Calu3 (cell line): ENCODE measurements at regions of chr7 and their contacts with region 1.

Region 1: GRCh38 chr7:95871078-95871782 is 98.9 kb downstream of the DYNC1I1 start:
- DNase-seq: peak; percentile 24
- H3K4me3 Mint-ChIP-seq: no peak overlapping the region
- H3K27ac Mint-ChIP-seq: no peak overlapping the region
- H3K4me1 Mint-ChIP-seq: no peaks in the 10 kb centered on the region
- H3K27me3 Mint-ChIP-seq: peaks cover 9% of the 10 kb centered on the region
- CTCF ChIP-seq: peak; percentile 33

Region 2: DNA sequence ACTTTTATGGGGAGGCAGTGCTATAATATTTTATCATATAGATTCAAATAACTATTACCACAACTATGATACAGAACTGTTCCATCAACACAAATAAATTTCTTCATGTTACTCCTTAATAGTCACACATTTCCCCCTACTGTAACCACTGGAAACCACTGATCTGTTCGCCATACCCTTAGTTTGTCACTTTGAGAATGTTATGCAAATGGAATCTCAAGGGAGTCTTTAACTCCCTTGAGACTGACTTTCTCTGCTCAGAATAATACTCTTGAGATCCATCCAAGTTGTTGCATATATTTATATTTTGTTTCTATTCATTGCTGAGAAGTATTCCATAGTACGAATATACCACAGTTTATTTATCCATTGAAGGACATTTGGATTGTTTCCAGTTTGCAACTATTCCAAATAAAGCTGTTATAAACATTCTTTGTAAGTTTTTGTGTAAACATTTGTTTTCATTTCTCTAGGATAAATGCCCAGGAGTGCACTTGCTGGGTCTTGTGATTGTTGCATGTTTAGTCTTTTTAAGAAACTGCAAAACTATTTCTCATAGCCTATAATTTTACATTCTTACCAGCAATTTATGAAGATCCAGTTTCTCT is 416.7 kb before region 1 on chr7:
- CTCF ChIA-PET with region 1: no interaction called
- intact Hi-C with region 1: no loop called
- DNase-seq: no peak
- H3K4me3 Mint-ChIP-seq: no peak overlapping the region
- H3K27ac Mint-ChIP-seq: no peak overlapping the region
- H3K4me1 Mint-ChIP-seq: no peaks in the 10 kb centered on the region
- H3K27me3 Mint-ChIP-seq: no peaks in the 10 kb centered on the region
- CTCF ChIP-seq: no peak

Region 3: DNA sequence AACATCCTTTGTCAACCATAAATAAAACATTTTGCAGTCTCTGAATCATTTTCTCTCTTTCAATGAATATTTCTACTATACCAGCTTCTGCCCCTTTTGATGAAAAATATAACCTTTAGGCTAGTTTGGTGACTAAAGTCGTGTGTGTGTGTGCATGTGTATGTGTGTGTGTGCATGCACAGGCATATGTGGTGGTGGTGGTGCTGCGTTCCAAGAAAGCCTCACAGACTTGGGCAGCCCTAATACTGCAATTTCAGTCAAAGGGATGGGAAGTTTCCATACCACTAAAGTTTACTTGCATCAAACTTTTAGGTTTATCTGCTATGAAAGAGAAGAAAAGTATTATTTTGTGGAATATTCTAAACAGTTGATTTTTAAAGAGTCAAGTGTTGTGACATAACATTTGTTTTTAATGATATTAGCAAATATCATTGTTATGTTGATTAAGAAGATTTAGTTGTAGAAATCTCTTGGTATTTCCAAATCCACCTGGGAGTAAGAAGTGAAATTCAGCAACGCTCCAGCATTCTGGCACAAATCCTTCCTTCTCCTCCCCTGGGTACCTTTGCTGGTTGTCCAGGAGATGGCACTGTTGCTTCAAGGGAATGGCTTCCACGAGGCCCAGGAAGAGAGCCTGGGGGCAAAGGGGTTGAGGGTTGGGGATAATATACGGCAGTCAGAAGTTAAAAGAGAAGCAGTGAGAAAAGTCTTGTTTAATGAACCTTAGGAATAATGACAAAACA is 344.0 kb before region 1 on chr7:
- CTCF ChIA-PET with region 1: no interaction called
- intact Hi-C with region 1: loop called (anchors 10 kb)
- DNase-seq: peak; percentile 55
- H3K4me3 Mint-ChIP-seq: no peak overlapping the region
- H3K27ac Mint-ChIP-seq: no peak overlapping the region
- H3K4me1 Mint-ChIP-seq: peaks cover 23% of the 10 kb centered on the region
- H3K27me3 Mint-ChIP-seq: no peaks in the 10 kb centered on the region
- CTCF ChIP-seq: peak; percentile 50

Region 4: GRCh38 chr7:95613051-95613792 is 258.0 kb before region 1 on chr7:
- CTCF ChIA-PET with region 1: no interaction called
- intact Hi-C with region 1: no loop called
- DNase-seq: no peak
- H3K4me3 Mint-ChIP-seq: no peak overlapping the region
- H3K27ac Mint-ChIP-seq: no peak overlapping the region
- H3K4me1 Mint-ChIP-seq: peaks cover 30% of the 10 kb centered on the region
- H3K27me3 Mint-ChIP-seq: no peaks in the 10 kb centered on the region
- CTCF ChIP-seq: no peak

Region 5: DNA sequence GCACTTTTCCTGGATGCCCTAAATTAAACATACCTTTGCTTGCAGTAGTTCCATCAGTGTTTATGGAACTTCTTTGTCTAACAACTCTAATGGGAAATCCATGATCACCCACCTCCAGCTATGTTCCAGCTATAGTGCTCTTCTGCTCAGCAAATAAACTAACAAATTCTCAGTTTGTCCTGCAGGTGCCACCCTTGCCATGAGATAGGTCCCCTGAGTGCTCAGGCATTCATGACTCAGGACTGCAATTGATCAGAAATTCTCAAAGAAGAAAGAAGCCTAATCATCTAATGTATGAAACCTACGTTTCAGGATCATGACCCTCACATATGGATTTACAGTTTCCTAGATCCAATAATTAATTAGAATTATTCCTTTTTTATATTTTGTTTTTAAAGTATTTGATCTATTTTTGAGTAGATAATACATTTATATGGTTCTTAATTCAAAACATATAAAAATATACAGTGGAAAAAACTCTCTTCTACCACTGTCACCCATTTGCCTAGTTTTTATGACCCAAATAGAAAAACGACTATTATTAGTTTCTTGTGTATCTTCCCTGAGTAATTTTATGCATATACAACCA is 147.5 kb before region 1 on chr7:
- CTCF ChIA-PET with region 1: interaction called, 16 read pairs
- intact Hi-C with region 1: loop called (anchors 1 kb)
- DNase-seq: peak; percentile 56
- H3K4me3 Mint-ChIP-seq: no peak overlapping the region
- H3K27ac Mint-ChIP-seq: no peak overlapping the region
- H3K4me1 Mint-ChIP-seq: no peaks in the 10 kb centered on the region
- H3K27me3 Mint-ChIP-seq: peaks cover 67% of the 10 kb centered on the region
- CTCF ChIP-seq: no peak

Region 6: GRCh38 chr7:95804052-95804451 is 67.2 kb before region 1 on chr7:
- CTCF ChIA-PET with region 1: no interaction called
- intact Hi-C with region 1: no loop called
- DNase-seq: no peak
- H3K4me3 Mint-ChIP-seq: no peak overlapping the region
- H3K27ac Mint-ChIP-seq: no peak overlapping the region
- H3K4me1 Mint-ChIP-seq: no peaks in the 10 kb centered on the region
- H3K27me3 Mint-ChIP-seq: peaks cover 63% of the 10 kb centered on the region
- CTCF ChIP-seq: no peak

Region 7: GRCh38 chr7:95950698-95951097 is 79.5 kb after region 1 on chr7:
- CTCF ChIA-PET with region 1: no interaction called
- intact Hi-C with region 1: no loop called
- DNase-seq: no peak
- H3K4me3 Mint-ChIP-seq: no peak overlapping the region
- H3K27ac Mint-ChIP-seq: no peak overlapping the region
- H3K4me1 Mint-ChIP-seq: no peaks in the 10 kb centered on the region
- H3K27me3 Mint-ChIP-seq: peaks cover 13% of the 10 kb centered on the region
- CTCF ChIP-seq: no peak